GM12878 (cell line): ENCODE measurements at regions of chr2 and their contacts with region 1.

Region 1: DNA sequence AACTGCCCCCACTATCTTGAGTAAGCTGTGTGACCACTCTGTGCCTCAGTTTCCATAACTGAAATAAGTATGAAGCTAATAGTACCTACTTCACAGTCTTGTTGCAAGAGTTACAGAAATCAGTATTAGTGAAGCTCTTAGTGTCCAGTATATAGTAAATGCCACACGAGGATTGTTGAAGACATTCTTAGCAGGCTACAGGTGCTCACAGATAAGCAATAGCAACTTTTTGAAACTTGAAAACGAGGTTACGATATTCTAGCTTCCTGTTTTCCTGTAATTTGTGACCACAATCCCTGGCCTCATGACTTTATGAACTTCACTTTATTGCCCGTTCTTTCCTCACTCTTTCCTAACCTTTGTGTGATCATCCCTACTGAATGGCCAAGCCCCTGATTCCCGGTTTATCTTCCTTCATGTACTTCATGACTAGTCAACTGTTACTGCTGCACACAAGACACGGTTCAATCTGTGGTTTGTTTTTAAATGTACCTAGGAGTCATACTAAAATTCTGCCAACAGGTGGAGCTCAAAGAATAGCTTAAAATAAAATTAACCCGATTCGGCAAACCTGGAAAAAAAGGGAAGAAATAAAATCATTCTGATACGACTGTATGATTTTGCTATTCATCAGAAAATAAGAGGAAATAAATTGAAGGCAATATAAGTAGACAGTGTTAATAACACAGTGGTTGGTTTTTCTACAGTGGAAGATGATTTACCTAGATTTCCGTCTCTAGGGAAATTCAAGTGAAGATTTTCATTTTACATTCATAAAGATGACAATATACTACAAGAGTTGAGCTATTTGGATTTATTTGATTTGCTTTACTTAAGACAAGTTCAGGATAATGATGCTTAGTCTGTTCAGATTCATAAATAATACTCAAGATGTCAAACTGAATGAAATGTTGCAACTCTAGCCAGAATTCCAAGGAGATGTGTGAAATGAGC is 38.1 kb upstream of the STAT1 start:
- DNase-seq: peak; percentile 12
- ATAC-seq: peak; percentile 66
- H3K4me3 ChIP-seq: no peak overlapping the region
- H3K27ac ChIP-seq: no peak overlapping the region
- H3K4me1 ChIP-seq: peaks cover 6% of the 10 kb centered on the region
- H3K27me3 ChIP-seq: no peaks in the 10 kb centered on the region
- CTCF ChIP-seq: peak; percentile 48 to 69 (median 60)
- EP300 ChIP-seq: no peak
- POLR2A ChIP-seq: no peak
- RAD21 ChIP-seq: peak; percentile 86

Region 2: GRCh38 chr2:190781604-190782198 is 270.4 kb before region 1 on chr2:
- CTCF ChIA-PET with region 1: interaction called, 9 read pairs
- POLR2A ChIA-PET with region 1: no interaction called
- RAD21 ChIA-PET with region 1: interaction called, 12 read pairs
- SMC1A ChIA-PET with region 1: interaction called, 7 read pairs
- in situ Hi-C with region 1: no loop called
- intact Hi-C with region 1: no loop called
- DNase-seq: peak; percentile 12
- ATAC-seq: peak; percentile 86
- H3K4me3 ChIP-seq: no peak overlapping the region
- H3K27ac ChIP-seq: no peak overlapping the region
- H3K4me1 ChIP-seq: no peaks in the 10 kb centered on the region
- H3K27me3 ChIP-seq: no peaks in the 10 kb centered on the region
- CTCF ChIP-seq: peak; percentile 29 to 55 (median 54); a peak in 4 of 6 replicates
- EP300 ChIP-seq: no peak
- POLR2A ChIP-seq: no peak
- RAD21 ChIP-seq: peak; percentile 85

Region 3: GRCh38 chr2:191066197-191066918 is 14.3 kb after region 1 on chr2:
- CTCF ChIA-PET with region 1: interaction called, 54 read pairs
- POLR2A ChIA-PET with region 1: no interaction called
- RAD21 ChIA-PET with region 1: interaction called, 7 read pairs
- SMC1A ChIA-PET with region 1: interaction called, 38 read pairs
- in situ Hi-C with region 1: no loop called
- intact Hi-C with region 1: no loop called
- DNase-seq: no peak
- ATAC-seq: no peak
- H3K4me3 ChIP-seq: no peak overlapping the region
- H3K27ac ChIP-seq: no peak overlapping the region
- H3K4me1 ChIP-seq: no peaks in the 10 kb centered on the region
- H3K27me3 ChIP-seq: no peaks in the 10 kb centered on the region; a peak in 1 of 4 replicates
- CTCF ChIP-seq: no peak
- EP300 ChIP-seq: no peak
- POLR2A ChIP-seq: no peak
- RAD21 ChIP-seq: no peak

Region 4: GRCh38 chr2:191128172-191128910 is 76.2 kb after region 1 on chr2:
- CTCF ChIA-PET with region 1: interaction called, 11 read pairs
- POLR2A ChIA-PET with region 1: interaction called, 4 read pairs
- RAD21 ChIA-PET with region 1: interaction called, 6 read pairs
- SMC1A ChIA-PET with region 1: interaction called, 8 read pairs
- in situ Hi-C with region 1: no loop called
- intact Hi-C with region 1: no loop called
- DNase-seq: no peak
- ATAC-seq: peak; percentile 94
- H3K4me3 ChIP-seq: no peak overlapping the region
- H3K27ac ChIP-seq: no peak overlapping the region
- H3K4me1 ChIP-seq: no peaks in the 10 kb centered on the region
- H3K27me3 ChIP-seq: no peaks in the 10 kb centered on the region
- CTCF ChIP-seq: no peak
- EP300 ChIP-seq: no peak
- POLR2A ChIP-seq: no peak
- RAD21 ChIP-seq: no peak

Region 5: DNA sequence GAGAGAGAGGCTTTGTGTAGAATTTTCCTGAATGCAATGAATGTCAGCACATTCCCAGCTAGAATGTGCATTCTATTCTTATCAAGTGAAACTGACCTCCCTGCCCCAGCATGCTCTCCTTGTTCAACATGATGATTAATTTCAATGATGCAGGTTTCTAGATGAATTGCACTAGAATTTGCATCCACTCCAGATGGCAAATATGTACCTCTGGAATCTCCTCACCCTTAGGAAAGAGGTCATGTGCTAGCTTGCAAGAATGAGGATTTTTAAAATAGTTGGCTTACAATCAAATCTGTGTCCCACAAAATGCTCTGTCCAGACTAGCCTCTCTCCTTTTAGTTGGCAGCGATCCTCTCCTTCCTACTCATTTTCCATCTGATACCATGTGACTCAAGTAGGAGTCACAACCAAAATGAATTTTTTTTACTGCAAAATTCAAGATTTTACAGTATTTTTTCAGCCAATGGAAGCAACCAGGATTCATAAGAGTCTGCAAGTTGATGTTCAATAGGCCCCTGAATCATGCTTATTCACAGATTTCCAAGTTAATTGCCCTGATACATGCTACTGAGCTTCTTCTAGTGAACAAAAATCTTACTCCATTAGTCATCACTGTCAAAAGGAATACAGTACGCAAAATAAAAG is 119.7 kb after region 1 on chr2:
- CTCF ChIA-PET with region 1: interaction called, 45 read pairs
- POLR2A ChIA-PET with region 1: no interaction called
- RAD21 ChIA-PET with region 1: interaction called, 5 read pairs
- SMC1A ChIA-PET with region 1: interaction called, 33 read pairs
- in situ Hi-C with region 1: no loop called
- intact Hi-C with region 1: no loop called
- DNase-seq: no peak
- ATAC-seq: no peak
- H3K4me3 ChIP-seq: no peak overlapping the region
- H3K27ac ChIP-seq: no peak overlapping the region
- H3K4me1 ChIP-seq: peaks cover 11% of the 10 kb centered on the region; the same call in 1 of the 2 replicates
- H3K27me3 ChIP-seq: no peaks in the 10 kb centered on the region
- CTCF ChIP-seq: no peak
- EP300 ChIP-seq: no peak
- POLR2A ChIP-seq: no peak
- RAD21 ChIP-seq: no peak

Region 6: GRCh38 chr2:191302459-191303139 is 250.5 kb after region 1 on chr2:
- CTCF ChIA-PET with region 1: interaction called, 4 read pairs
- POLR2A ChIA-PET with region 1: no interaction called
- RAD21 ChIA-PET with region 1: no interaction called
- SMC1A ChIA-PET with region 1: interaction called, 3 read pairs
- in situ Hi-C with region 1: no loop called
- intact Hi-C with region 1: loop called (anchors 10 kb)
- DNase-seq: no peak
- ATAC-seq: peak; percentile 82
- H3K4me3 ChIP-seq: no peak overlapping the region
- H3K27ac ChIP-seq: no peak overlapping the region
- H3K4me1 ChIP-seq: no peaks in the 10 kb centered on the region
- H3K27me3 ChIP-seq: peaks cover 0 to 3% of the 10 kb centered on the region in 2 experiments; a peak in 1 of 4 replicates
- CTCF ChIP-seq: peak; percentile 24 to 47 (median 38)
- EP300 ChIP-seq: no peak
- POLR2A ChIP-seq: no peak
- RAD21 ChIP-seq: peak; percentile 37